ENCODE measurements at regions of chr1 and their contacts with region 1.

Region 1: DNA sequence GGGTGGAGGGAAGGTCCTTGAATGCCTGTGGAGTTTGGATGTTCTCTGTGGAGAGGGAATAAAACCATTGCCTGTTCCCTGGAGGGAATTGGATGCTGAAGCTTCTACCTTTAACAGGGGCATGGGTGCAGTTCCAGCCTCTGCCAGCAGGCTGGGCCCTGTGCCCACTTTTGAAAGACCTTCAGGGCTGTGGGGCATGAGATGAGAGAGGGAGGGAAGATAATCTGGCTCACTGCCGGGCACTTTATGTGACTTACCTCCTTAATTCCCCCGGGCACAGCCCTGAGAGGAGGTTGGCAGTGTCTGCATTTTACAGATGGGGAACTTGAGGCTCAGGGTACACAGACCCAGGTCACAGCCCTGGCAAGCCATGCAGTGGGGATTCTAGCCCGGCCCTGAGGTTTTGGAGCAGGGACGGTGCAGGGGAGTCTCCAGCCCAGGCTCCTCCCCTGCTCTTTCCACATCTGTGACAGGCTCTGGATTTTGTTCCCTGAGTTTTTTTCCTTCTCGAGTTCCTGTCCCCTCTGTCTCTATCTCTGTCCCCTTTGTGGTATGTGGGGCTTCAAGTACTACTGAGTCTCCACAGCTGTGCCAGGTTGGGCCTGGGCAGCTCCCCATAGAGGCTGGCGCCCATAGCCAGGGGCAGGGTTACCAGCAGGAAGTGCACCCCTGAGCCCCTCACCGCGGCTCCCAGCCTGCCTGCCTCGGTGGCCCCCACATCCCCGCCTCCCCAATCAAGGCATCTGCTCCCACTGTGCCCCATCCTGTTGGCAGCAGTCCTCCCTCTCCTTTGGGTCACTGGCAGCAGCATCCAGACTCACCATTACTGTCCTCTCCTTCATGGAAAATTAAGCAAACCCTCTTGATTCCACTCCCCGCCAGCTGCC is 14.0 kb upstream of the THEMIS2 start:
- DNase-seq: peak; percentile 63
- H3K4me3 ChIP-seq: no peak overlapping the region
- H3K27ac ChIP-seq: no peak overlapping the region
- H3K27me3 ChIP-seq: no peaks in the 10 kb centered on the region
- CTCF ChIP-seq: peak; percentile 97

Region 2: DNA sequence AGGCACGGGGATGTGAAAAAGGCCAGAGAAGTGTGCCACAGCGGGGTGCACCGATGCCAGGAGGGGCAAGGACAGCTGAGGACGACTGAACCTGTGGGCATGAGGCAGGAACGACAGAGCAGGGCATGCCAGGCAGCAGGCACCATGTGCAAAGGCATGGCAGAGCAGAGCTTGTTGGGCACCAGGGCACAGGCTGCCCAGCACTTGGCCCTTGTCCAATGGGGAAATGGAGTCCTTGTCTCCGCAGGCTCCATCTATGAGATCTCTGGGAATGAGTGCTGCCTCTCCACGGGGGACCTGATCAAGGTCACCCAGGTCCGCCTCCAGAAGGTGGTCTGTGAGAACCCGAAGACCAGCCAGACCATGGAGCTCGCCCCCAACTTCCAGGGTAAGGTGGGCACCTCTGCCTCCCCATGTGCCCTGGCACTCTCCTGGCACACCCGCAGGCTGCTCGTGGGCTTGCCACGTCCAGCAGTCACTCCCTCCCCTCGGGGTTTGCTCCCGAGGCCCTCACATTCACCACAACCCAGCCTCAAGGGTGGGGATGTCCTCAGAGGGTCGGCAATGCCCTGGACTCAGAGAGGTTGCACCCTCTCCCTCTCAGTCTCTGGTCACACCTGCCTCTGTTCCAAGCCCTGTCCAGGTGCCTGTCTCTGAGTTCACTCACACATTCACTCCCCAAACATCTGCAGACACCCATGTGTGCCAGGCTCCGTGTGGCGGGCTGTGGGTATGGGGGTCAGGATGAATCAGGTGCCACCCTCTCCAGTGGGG is 18.2 kb after region 1 on chr1:
- CTCF ChIA-PET with region 1: interaction called, 3 read pairs
- POLR2A ChIA-PET with region 1: interaction called, 14 read pairs
- DNase-seq: no peak
- H3K4me3 ChIP-seq: no peak overlapping the region
- H3K27ac ChIP-seq: no peak overlapping the region
- H3K27me3 ChIP-seq: no peaks in the 10 kb centered on the region
- CTCF ChIP-seq: no peak

Region 3: DNA sequence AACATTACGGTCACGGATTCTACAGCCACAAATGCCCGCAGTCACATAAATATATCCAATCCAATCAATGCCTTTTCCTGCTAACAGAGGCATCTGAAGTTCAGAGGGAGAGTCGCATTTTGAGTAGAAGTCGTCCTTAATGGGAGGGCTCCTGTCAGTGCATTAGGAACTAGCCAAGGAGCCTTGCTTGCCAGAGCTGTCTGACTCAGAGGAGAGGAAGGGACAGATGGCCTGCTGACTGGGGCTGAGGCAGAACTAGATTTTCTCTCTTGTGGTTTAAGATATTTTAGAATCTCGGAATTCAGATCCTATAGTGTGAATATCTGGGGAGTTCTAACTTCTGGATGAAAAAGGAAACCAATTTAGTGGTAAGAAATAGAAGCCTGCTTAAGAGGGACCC is 112.1 kb after region 1 on chr1:
- CTCF ChIA-PET with region 1: interaction called, 11 read pairs
- POLR2A ChIA-PET with region 1: no interaction called
- DNase-seq: peak; percentile 54
- H3K4me3 ChIP-seq: no peak overlapping the region
- H3K27ac ChIP-seq: peak overlapping the region; percentile 70
- H3K27me3 ChIP-seq: no peaks in the 10 kb centered on the region
- CTCF ChIP-seq: no peak

Region 4: GRCh38 chr1:27979151-27979858 is 121.0 kb after region 1 on chr1:
- CTCF ChIA-PET with region 1: interaction called, 51 read pairs
- POLR2A ChIA-PET with region 1: no interaction called
- DNase-seq: peak; percentile 48
- H3K4me3 ChIP-seq: no peak overlapping the region
- H3K27ac ChIP-seq: no peak overlapping the region
- H3K27me3 ChIP-seq: no peaks in the 10 kb centered on the region
- CTCF ChIP-seq: peak; percentile 62